AG04449 (cell line): ENCODE measurements at regions of chr10 and their contacts with region 1.

Region 1: DNA sequence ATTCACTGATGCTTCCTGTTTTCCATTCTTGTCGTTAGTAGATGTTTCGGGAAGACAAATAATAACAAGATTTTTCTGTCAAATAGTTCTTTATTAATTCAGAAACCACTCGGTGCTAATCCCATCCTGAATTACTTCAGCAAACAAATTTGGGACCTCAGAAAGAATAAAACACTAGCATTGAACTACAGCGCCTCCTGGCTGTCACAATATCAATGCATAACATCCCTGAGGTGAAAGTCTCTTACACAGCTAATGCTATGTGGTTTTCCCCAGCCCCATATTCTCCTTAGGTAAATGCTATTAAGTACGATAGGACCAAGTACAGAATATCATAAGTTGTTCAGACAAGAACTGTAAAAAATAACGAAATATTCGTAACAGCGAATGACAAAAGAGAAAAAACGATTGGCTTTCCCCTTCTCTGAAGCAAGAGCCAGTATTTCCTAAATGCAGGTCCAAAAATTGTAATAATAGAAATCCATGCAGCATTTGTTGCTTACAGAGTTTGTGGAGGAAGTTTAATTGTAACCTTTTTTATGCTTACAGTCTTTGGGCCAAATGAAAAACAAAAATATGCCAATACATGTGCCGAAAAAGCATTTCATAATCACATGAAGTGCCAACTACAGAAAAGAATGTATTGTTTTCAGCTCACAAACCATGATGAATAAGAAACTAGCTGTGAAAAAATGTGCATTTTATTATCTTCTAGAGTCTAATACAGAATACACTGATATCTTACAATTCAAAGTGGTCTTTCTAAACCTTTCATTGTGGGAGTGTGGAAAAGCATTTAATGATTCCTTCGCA is 47.3 kb downstream of the MYPN start:
- DNase-seq: no peak
- H3K4me3 ChIP-seq: no peak overlapping the region
- CTCF ChIP-seq: peak; percentile 60

Region 2: DNA sequence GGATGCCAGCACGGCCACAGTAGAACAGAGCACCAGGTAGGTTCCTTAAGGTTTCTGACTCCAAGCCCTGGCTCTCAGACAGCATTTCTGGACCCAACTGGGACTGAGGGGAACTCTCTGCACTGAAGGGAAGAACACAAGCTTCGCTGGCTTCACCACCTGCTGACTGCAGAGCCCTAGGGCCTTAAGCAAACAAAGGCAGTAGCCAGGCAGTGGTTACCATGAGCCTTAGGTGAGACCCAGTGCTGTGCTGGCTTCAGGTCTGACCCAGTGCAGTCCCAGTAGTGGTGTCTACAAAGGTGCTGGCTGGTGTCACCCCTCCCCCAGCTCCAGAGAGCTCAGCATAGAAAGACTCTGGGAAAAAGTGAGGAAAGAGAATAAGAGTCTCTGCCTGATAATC is 212.7 kb before region 1 on chr10:
- CTCF ChIA-PET with region 1: no interaction called
- POLR2A ChIA-PET with region 1: no interaction called
- DNase-seq: no peak
- H3K4me3 ChIP-seq: no peak overlapping the region
- CTCF ChIP-seq: no peak

Region 3: GRCh38 chr10:68074775-68075549 is 81.6 kb before region 1 on chr10 and contains the start of gene HERC4:
- CTCF ChIA-PET with region 1: interaction called, 50 read pairs
- POLR2A ChIA-PET with region 1: no interaction called
- DNase-seq: no peak
- H3K4me3 ChIP-seq: peak within 1 kb of the TSS; percentile 97
- CTCF ChIP-seq: no peak

Region 4: GRCh38 chr10:68096913-68097503 is 59.6 kb before region 1 on chr10:
- CTCF ChIA-PET with region 1: interaction called, 39 read pairs
- POLR2A ChIA-PET with region 1: interaction called, 5 read pairs
- DNase-seq: peak; percentile 82
- H3K4me3 ChIP-seq: no peak overlapping the region
- CTCF ChIP-seq: no peak

Region 5: DNA sequence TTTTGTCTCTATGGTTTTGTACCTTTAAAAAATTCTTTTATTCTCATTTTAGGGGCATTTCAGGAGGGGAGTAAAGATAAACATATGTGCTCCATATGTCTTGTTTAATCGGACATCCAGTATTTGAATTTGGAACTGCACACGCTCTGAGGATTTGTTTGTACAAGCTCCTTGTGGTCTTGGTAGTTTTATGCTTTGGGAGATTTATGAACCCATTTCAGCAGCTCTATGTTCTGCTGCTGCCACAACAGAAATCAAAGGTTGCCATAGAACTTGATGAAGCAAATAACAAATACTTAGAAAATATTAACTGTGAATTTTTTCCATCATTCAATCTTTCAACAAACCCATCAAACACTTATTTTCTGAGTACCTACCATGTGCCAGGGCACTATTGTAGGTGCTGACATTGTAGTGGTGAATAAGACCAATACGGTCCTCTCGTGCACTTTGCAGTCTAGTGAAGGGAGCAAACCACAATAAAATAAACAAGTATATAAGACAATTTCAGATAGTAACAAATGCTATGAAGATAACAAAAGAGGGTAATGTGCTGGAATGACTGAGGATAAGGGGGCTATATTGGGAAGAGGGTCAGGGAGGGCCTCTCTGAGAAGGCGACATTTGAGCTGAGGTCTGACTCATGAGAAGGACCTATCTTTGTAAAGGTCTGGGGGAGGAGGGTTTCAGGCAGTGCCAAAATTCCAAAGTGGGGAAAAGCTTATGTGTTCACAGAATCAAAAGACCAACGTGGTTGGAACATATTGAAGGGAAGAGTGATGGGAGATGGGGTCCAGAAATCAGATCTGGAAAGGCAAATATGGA is 16.9 kb before region 1 on chr10:
- CTCF ChIA-PET with region 1: interaction called, 17 read pairs
- POLR2A ChIA-PET with region 1: interaction called, 3 read pairs
- DNase-seq: no peak
- H3K4me3 ChIP-seq: no peak overlapping the region
- CTCF ChIP-seq: no peak

Region 6: DNA sequence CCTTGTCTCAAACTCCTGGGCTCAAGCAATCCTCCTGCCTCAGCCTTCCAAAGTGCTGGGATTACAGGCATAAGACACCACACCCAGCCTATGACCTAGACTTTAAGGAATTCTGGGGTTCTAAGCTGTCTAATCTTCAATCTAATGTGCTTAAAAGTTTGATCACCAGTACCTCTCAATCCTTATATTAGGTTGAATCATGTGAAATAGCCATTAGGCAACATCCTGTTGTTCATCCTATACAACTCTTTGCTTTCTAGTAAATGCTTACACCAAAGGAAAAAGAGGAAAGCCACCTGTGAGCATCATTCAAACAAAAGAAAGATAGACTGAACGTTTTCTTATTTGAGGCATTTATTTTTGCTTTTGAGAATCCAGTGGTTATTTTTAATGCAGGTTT is 19.4 kb after region 1 on chr10:
- CTCF ChIA-PET with region 1: interaction called, 35 read pairs
- POLR2A ChIA-PET with region 1: no interaction called
- DNase-seq: no peak
- H3K4me3 ChIP-seq: no peak overlapping the region
- CTCF ChIP-seq: no peak

Region 7: GRCh38 chr10:68301790-68302502 is 145.4 kb after region 1 on chr10:
- CTCF ChIA-PET with region 1: interaction called, 13 read pairs
- POLR2A ChIA-PET with region 1: no interaction called
- DNase-seq: peak; percentile 28
- H3K4me3 ChIP-seq: no peak overlapping the region
- CTCF ChIP-seq: peak; percentile 28